ENCODE measurements at regions of chr4 and their contacts with region 1.

Region 1: GRCh38 chr4:185597532-185598188 is 62.4 kb upstream of the PDLIM3 start:
- DNase-seq: peak; percentile 73
- ATAC-seq: peak; percentile 63
- H3K4me3 Mint-ChIP-seq: no peak overlapping the region
- H3K27ac Mint-ChIP-seq: no peak overlapping the region
- H3K4me1 Mint-ChIP-seq: no peaks in the 10 kb centered on the region
- H3K27me3 Mint-ChIP-seq: peaks cover 18% of the 10 kb centered on the region

Region 2: GRCh38 chr4:185587427-185588161 is 10.1 kb before region 1 on chr4:
- CTCF ChIA-PET with region 1: interaction called, 17 read pairs
- POLR2A ChIA-PET with region 1: no interaction called
- DNase-seq: peak; percentile 43
- ATAC-seq: peak; percentile 67
- H3K4me3 Mint-ChIP-seq: peak overlapping the region; percentile 23
- H3K27ac Mint-ChIP-seq: no peak overlapping the region
- H3K4me1 Mint-ChIP-seq: peaks cover 10% of the 10 kb centered on the region
- H3K27me3 Mint-ChIP-seq: peaks cover 42% of the 10 kb centered on the region

Region 3: DNA sequence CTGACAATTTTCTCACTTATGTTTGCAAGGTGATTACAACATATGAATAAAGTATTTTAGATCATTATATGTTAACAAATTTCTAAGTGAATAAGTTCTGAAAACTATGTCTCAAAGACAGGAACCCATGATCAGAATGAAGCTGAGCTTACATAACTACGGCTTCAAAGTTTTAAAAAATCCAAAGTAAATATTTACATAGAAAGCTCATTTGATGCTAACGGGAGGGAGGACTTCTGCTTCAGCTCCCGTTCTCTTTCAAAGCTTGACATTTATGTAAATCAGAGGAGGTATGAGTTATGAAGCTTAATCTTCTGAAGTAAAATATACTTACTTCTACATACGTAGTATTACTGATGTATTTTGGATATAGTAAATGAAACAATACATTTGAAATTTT is 10.5 kb after region 1 on chr4:
- CTCF ChIA-PET with region 1: interaction called, 16 read pairs
- POLR2A ChIA-PET with region 1: interaction called, 3 read pairs
- DNase-seq: no peak
- ATAC-seq: no peak
- H3K4me3 Mint-ChIP-seq: no peak overlapping the region
- H3K27ac Mint-ChIP-seq: no peak overlapping the region
- H3K4me1 Mint-ChIP-seq: no peaks in the 10 kb centered on the region
- H3K27me3 Mint-ChIP-seq: peaks cover 11% of the 10 kb centered on the region